Posterior vena cava (tissue), 2 donors: ENCODE measurements at regions of chrX and their contacts with region 1.

Region 1: GRCh38 chrX:118577041-118577440 is 81.4 kb downstream of the DOCK11 start:
- DNase-seq: no peak

Region 2: DNA sequence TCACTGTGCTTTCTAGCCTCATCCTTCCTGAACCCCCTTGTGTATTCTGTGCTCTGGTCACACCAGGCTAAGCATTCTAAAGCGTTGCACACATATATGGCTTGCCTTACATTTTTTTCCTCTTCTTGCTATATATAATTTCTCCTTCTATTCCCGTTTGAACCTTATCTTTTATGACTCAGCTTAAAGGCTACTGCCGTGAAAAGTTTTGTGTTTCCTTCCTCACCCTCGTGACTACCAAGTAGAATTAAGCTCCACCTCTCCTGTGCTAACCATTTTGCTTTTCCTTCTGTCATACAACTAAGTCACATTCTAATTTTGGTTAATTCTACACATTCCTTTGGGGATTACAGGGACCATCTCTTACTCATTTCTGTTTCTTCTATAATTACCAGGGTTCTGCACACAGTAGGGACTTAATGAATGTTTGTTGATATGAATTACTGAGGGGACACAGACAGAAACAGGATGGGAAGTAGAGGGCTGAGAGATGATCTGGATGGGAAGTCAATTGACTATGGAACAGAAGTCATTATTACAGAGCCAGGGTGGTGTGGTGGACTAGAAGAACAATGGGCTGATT is 14.4 kb before region 1 on chrX:
- intact Hi-C with region 1: loop called in 1 of 2 experiments (anchors 1 kb)
- DNase-seq: no peak